ENCODE measurements at regions of chr7 and their contacts with region 1.

Region 1: GRCh38 chr7:22229148-22229547 is 127.8 kb downstream of the RAPGEF5 start:
- DNase-seq: no peak
- ATAC-seq: no peak
- H3K4me3 ChIP-seq: no peak overlapping the region
- H3K27ac ChIP-seq: no peak overlapping the region
- H3K4me1 ChIP-seq: no peaks in the 10 kb centered on the region
- H3K27me3 ChIP-seq: no peaks in the 10 kb centered on the region
- CTCF ChIP-seq: no peak

Region 2: DNA sequence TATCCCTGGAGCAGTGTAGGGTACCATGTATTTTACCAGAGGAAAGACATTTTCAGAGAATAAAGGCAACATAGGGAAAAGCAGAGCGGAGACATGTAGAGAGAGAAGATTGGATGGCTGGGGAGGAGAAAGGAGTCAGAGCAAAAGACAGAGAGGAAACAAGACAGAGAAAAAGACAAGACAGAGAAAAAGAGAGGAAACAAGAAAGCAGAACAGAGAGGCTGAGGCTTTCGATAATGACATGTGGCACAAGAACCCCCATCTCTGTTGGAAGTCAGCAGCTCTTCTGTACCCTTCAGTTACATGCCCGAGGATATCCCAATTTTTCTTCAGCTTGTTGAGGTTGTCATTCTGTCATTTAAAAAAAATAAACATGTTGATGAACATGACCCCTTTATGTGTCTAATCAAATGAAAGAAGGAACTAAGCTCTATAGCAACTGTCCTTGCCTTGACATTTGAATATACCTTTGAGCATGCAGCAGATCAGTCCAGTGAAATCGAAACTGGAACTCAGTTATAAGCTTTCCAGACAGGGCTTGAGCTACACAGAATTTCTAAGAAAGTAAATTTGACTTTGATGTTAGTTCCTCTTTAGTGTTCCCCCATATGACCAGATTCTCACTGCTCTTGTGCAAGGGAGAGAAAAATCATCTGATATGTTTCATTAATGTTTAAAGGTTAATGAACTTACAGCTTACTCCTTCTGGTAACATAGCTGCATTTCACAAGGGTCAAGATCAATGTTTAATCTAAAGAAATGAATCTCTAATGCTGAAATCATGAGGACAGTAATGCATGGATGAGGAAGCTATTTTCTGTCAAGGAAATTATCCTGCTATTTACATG is 876.4 kb before region 1 on chr7:
- intact Hi-C with region 1: no loop called
- DNase-seq: no peak
- ATAC-seq: no peak
- H3K4me3 ChIP-seq: no peak overlapping the region
- H3K27ac ChIP-seq: no peak overlapping the region
- H3K4me1 ChIP-seq: no peaks in the 10 kb centered on the region
- H3K27me3 ChIP-seq: no peaks in the 10 kb centered on the region
- CTCF ChIP-seq: no peak

Region 3: GRCh38 chr7:22822486-22823141 is 593.5 kb after region 1 on chr7 and contains the start of gene TOMM7:
- intact Hi-C with region 1: loop called in 1 of 2 experiments (anchors 5 kb)
- DNase-seq: peak; percentile 90 to 96
- ATAC-seq: peak; percentile 96 to 98 (median 98)
- H3K4me3 ChIP-seq: peak within 1 kb of the TSS; percentile 97
- H3K27ac ChIP-seq: peak within 1 kb of the TSS; percentile 92
- H3K4me1 ChIP-seq: peaks cover 20% of the 10 kb centered on the region
- H3K27me3 ChIP-seq: no peaks in the 10 kb centered on the region
- CTCF ChIP-seq: peak; percentile 55
- total RNA-seq, gene TOMM7: 465 to 704 (median 639) TPM